Activated CD4-positive, alpha-beta T cell treated with anti-CD3 and anti-CD28 coated beads for 36 hours (primary cell): ENCODE measurements at regions of chr16 and their contacts with region 1.

Region 1: GRCh38 chr16:85610508-85611332 is 2.4 kb upstream of the GSE1 start:
- DNase-seq: peak; percentile 94
- ATAC-seq: peak; percentile 72
- H3K4me3 Mint-ChIP-seq: peak overlapping the region; percentile 59
- H3K27ac Mint-ChIP-seq: no peak overlapping the region
- H3K4me1 Mint-ChIP-seq: peaks cover 27% of the 10 kb centered on the region
- H3K27me3 Mint-ChIP-seq: peaks cover 9% of the 10 kb centered on the region

Region 2: DNA sequence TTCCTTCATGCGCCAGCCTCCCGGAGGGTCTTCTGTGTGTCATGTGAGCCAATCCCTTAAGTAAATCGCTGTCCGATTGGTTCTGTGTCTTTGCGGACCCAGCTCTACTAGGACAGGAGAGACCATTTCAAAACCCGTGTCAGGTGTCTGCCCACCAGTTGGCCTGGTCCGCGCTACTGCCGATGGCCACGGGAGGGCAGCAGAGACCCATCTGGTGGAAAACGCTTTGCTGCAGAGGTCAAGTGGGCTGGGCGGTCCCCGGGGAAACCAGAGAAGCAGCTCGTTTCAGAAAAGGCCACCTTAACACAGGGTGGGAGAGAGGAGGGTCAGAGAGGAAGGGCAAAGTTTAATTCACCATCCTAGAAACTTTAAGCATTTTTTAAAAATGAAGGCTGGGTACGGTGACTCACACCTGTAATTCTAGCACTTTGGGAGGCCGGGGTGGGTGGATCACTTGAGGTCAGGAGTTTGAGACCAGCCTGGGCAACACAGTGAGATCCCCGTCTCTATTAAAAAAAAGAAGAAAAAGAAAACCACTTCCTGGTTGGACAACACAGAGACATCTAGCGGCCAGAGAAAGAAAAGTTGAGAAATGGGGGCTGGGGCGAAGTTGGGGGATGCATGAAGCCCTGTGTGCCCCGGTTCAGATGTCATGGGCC is 495.7 kb before region 1 on chr16:
- CTCF ChIA-PET with region 1: interaction called, 3 read pairs
- POLR2A ChIA-PET with region 1: no interaction called
- intact Hi-C with region 1: loop called in 1 of 2 experiments (anchors 10 kb)
- DNase-seq: peak; percentile 93
- ATAC-seq: peak; percentile 94
- H3K4me3 Mint-ChIP-seq: peak overlapping the region; percentile 9
- H3K27ac Mint-ChIP-seq: peak overlapping the region; percentile 91
- H3K4me1 Mint-ChIP-seq: peaks cover 7% of the 10 kb centered on the region
- H3K27me3 Mint-ChIP-seq: no peaks in the 10 kb centered on the region

Region 3: GRCh38 chr16:85305996-85306792 is 304.5 kb before region 1 on chr16:
- CTCF ChIA-PET with region 1: interaction called, 9 read pairs
- POLR2A ChIA-PET with region 1: no interaction called
- intact Hi-C with region 1: loop called in 1 of 2 experiments (anchors 1 kb)
- DNase-seq: peak; percentile 95
- ATAC-seq: peak; percentile 94
- H3K4me3 Mint-ChIP-seq: no peak overlapping the region
- H3K27ac Mint-ChIP-seq: peak overlapping the region; percentile 89
- H3K4me1 Mint-ChIP-seq: peaks cover 55% of the 10 kb centered on the region
- H3K27me3 Mint-ChIP-seq: no peaks in the 10 kb centered on the region

Region 4: DNA sequence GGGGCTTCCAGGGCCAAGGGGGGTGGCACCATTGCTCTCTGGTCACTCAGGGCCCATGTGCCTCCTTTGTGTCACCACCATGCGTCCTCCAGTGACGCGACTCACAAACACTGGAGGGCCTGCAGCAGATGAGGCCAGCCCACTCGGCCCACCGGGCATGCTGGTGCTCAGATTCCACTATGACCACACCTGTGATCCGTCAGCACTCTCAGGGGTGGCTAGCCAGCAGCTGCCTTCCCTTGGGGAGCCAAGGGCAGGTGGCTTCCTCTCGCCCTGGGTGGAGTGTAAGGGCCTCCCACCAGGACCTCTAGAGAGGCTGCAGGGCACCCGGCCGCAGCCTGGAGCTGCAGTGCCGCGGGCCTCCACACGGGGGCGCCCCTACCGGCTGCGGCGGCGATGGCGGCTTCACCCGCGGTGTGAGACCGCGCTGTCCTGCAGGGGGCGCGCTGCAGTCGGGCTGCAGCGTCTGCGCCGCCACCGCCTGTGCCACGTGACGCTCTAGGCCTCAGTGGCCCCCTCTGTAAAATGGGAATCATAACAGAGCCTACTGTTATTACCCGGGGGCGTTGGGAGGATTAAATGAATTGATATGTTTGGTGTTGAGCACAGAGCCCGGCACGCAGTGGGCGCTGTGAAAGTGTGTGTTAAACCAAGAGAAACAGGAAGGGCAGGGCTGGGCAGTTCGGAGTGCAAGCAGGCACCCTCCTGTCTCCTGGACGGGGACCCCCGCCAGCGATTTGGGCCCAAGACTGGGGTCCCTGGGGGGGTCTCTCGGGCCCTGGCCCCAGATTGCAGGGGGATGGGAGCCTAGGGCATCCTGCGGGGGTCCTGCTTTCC is 190.0 kb before region 1 on chr16:
- CTCF ChIA-PET with region 1: interaction called, 71 read pairs
- POLR2A ChIA-PET with region 1: no interaction called
- intact Hi-C with region 1: loop called (anchors 1 kb)
- DNase-seq: peak; percentile 89
- ATAC-seq: peak; percentile 76
- H3K4me3 Mint-ChIP-seq: no peak overlapping the region
- H3K27ac Mint-ChIP-seq: no peak overlapping the region
- H3K4me1 Mint-ChIP-seq: peaks cover 7% of the 10 kb centered on the region
- H3K27me3 Mint-ChIP-seq: no peaks in the 10 kb centered on the region

Region 5: DNA sequence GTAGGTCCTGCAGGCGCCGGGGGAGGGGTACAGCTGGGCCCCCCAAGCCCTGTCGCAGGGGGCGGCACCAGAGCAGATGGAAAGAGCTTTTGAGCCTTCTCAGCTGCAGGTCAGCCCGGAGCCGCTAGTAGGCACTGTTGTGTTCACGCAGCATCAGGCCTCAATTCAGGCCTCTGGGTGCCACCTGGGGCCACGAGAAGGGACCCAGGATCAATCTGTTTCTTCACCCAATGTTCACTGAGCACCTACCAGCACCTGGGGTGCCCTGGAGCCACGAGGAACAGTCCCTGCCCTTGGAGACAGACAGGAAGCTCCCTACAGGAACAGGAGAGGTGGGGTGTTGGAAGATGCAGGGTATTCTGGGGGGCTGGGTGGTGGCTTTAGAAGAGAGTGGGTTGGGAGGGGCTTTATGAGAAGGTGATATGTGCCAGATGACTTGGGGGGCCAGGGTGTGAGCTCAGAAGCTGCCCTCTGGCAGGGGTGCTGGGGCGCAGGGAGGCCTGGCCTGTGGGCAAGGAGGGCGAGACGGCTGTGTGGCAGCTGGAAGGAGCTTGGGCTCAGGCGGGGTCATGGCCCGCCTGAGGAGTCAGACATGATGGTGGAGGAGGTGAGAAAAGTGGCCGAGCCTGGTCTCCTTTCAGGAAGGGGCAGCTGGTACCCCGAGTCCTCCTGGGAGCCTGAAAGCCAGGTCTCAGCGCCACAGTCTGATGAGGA is 119.5 kb before region 1 on chr16:
- CTCF ChIA-PET with region 1: interaction called, 22 read pairs
- POLR2A ChIA-PET with region 1: no interaction called
- intact Hi-C with region 1: loop called (anchors 1 to 5 kb)
- DNase-seq: peak; percentile 69
- ATAC-seq: peak; percentile 60
- H3K4me3 Mint-ChIP-seq: no peak overlapping the region
- H3K27ac Mint-ChIP-seq: no peak overlapping the region
- H3K4me1 Mint-ChIP-seq: peaks cover 1% of the 10 kb centered on the region
- H3K27me3 Mint-ChIP-seq: peaks cover 3% of the 10 kb centered on the region

Region 6: GRCh38 chr16:85554112-85554813 is 56.5 kb before region 1 on chr16:
- CTCF ChIA-PET with region 1: interaction called, 14 read pairs
- POLR2A ChIA-PET with region 1: interaction called, 7 read pairs
- intact Hi-C with region 1: loop called (anchors 1 kb)
- DNase-seq: peak; percentile 90
- ATAC-seq: peak; percentile 71
- H3K4me3 Mint-ChIP-seq: peak overlapping the region; percentile 81
- H3K27ac Mint-ChIP-seq: peak overlapping the region; percentile 88
- H3K4me1 Mint-ChIP-seq: peaks cover 32% of the 10 kb centered on the region
- H3K27me3 Mint-ChIP-seq: no peaks in the 10 kb centered on the region

Region 7: DNA sequence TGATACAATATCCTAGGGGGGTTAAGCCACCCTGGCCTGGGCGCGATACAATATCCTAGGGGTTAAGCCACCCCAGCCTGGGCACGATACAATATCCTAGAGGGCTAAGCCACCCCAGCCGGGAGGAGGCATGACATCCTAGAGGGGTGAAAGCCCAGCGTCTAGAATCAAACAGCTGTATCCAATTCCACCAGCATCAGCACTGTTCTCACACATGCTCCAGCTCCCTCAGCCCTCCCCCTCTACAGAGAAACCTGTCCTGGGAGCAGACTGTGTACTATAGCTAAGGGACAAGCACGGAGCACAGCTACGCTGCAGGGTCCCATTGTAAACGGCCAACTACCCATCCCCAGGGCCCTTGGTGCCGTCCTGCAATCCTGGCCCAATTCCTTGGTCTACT is 71.8 kb after region 1 on chr16:
- CTCF ChIA-PET with region 1: no interaction called
- POLR2A ChIA-PET with region 1: no interaction called
- intact Hi-C with region 1: no loop called
- DNase-seq: no peak
- ATAC-seq: no peak
- H3K4me3 Mint-ChIP-seq: no peak overlapping the region
- H3K27ac Mint-ChIP-seq: no peak overlapping the region
- H3K4me1 Mint-ChIP-seq: peaks cover 14% of the 10 kb centered on the region
- H3K27me3 Mint-ChIP-seq: no peaks in the 10 kb centered on the region

Region 8: DNA sequence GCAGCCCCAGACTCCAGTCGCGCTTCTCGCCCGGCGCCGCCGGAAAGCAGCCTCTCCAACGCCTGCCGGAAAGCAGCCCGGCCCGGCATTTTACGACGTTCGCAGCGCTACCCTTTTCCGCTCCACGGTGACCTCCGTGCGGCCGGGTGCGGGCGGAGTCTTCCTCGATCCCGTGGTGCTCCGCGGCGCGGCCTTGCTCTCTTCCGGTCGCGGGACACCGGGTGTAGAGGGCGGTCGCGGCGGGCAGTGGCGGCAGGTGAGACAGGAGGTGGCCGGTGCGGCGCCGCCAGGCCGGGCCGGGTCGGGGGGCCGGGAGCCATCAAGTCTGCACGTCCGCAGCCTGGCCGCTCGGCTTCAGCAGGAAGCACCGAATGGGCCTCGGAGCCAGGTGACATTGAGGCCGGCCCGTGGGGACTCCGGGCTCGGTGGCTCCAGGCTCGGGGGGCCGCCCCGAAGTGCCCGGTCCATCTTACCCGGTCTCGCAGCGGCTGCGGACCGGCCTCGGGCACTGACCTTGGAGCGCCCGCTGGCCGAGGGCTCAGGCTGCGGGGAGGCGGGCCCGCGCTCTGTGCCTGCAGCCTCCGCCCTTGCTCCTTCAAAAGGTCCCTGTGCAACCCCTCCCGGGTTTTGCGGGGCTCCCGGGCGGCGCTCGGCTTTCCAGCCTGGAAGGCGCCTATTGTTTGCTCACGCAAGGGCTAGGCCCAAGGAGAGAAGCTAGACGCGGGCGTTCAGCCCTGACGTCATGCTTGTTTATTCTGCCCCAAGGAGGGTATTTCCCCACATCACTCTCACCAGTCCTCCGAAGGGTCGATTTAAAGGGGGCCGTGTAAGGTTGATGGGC is 189.0 kb after region 1 on chr16 and contains the starts of genes COX4I1 and EMC8:
- CTCF ChIA-PET with region 1: no interaction called
- POLR2A ChIA-PET with region 1: no interaction called
- intact Hi-C with region 1: loop called in 1 of 2 experiments (anchors 2 kb)
- DNase-seq: peak; percentile 97
- ATAC-seq: peak; percentile 95
- H3K4me3 Mint-ChIP-seq: peak within 1 kb of the TSS; percentile 85
- H3K27ac Mint-ChIP-seq: peak within 1 kb of the TSS; percentile 89
- H3K4me1 Mint-ChIP-seq: peaks cover 60% of the 10 kb centered on the region
- H3K27me3 Mint-ChIP-seq: no peaks in the 10 kb centered on the region
- total RNA-seq, gene COX4I1: 374 to 508 TPM
- total RNA-seq, gene EMC8: 30.4 to 32.9 TPM